Caco-2 (cell line): ENCODE measurements at regions of chr17 and their contacts with region 1.

Region 1: GRCh38 chr17:2685696-2686095 is 25.9 kb downstream of the CLUH start:
- DNase-seq: no peak
- H3K4me3 ChIP-seq: no peak overlapping the region
- H3K4me3 Mint-ChIP-seq: no peak overlapping the region
- H3K27ac Mint-ChIP-seq: no peak overlapping the region
- H3K4me1 ChIP-seq: 0 out of 2 replicates have a peak, but pooled peaks cover 10% of the 10 kb centered on the region
- H3K4me1 Mint-ChIP-seq: peaks cover 9% of the 10 kb centered on the region
- H3K27me3 ChIP-seq: no peaks in the 10 kb centered on the region
- H3K27me3 Mint-ChIP-seq: no peaks in the 10 kb centered on the region
- CTCF ChIP-seq: no peak

Region 2: DNA sequence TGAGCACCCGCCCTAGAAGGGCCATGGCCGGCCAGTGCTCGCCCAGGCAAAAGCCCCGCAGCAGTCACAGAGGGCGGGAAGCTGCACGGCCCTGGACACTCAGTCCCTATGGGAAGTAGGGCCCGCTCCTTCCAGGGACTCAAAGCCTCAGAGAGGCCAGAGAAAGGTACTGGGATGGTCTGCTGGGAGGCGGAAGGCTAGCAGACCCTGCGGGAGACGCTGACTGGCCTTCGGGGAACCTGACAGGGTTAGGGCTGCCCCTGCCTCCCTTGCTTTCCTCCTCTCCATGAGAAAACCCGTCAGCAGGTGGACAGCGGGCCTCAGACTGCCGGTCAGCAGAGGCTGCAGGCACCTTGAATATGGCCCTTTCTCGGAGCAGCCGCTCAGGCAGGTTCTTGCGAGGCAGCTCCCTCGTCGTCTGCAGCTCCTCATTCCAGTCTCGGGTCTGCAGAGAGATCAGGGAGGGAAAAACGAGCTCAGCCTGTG is 14.4 kb after region 1 on chr17:
- CTCF ChIA-PET with region 1: interaction called, 13 read pairs
- POLR2A ChIA-PET with region 1: no interaction called
- intact Hi-C with region 1: no loop called
- DNase-seq: peak in 1 of 2 experiments; percentile 23
- H3K4me3 ChIP-seq: no peak overlapping the region
- H3K4me3 Mint-ChIP-seq: no peak overlapping the region
- H3K27ac Mint-ChIP-seq: no peak overlapping the region
- H3K4me1 ChIP-seq: no peaks in the 10 kb centered on the region
- H3K4me1 Mint-ChIP-seq: no peaks in the 10 kb centered on the region
- H3K27me3 ChIP-seq: no peaks in the 10 kb centered on the region
- H3K27me3 Mint-ChIP-seq: no peaks in the 10 kb centered on the region
- CTCF ChIP-seq: no peak

Region 3: GRCh38 chr17:2786176-2786881 is 100.6 kb after region 1 on chr17:
- CTCF ChIA-PET with region 1: no interaction called
- POLR2A ChIA-PET with region 1: no interaction called
- intact Hi-C with region 1: no loop called
- DNase-seq: peak; percentile 95 to 98
- H3K4me3 ChIP-seq: no peak overlapping the region
- H3K4me3 Mint-ChIP-seq: no peak overlapping the region
- H3K27ac Mint-ChIP-seq: no peak overlapping the region
- H3K4me1 ChIP-seq: peaks cover 4% of the 10 kb centered on the region; the same call in 1 of the 2 replicates
- H3K4me1 Mint-ChIP-seq: peaks cover 6% of the 10 kb centered on the region
- H3K27me3 ChIP-seq: no peaks in the 10 kb centered on the region
- H3K27me3 Mint-ChIP-seq: no peaks in the 10 kb centered on the region
- CTCF ChIP-seq: peak; percentile 94 to 96